CD14-positive monocyte (primary cell): ENCODE measurements at regions of chr1 and their contacts with region 1.

Region 1: DNA sequence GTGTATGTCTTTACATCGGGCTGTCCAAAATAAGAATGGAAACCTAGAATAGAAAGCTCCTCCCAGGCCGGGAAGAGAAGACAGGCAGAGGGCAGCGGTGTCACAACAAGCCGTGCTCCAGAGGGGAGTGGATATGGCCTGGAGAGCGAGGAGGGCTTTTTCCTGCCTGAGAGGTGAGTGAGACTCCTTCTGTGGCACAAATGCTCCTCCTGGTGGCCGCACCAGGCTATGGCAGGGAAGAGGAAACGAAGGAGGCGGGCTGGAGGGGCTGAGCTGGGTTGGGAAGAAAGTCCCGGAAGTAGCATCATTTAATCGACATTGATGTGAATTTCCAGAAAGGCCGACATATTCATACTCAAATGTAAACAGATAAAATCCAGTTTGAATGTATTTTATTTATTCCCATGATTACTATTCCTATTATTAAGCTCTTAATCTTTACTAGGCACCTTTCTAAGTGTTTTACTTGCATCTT is 54.7 kb downstream of the MEF2D start:
- DNase-seq: peak; percentile 63 to 77 (median 64)
- H3K4me3 ChIP-seq: no peak overlapping the region
- H3K4me3 Mint-ChIP-seq: peak overlapping the region in 1 of 2 donors; percentile 63
- H3K27ac ChIP-seq: no peak overlapping the region
- H3K27ac Mint-ChIP-seq: no peak overlapping the region
- H3K4me1 ChIP-seq: peaks cover 0 to 4% of the 10 kb centered on the region in 2 donors
- H3K4me1 Mint-ChIP-seq: peaks cover 5% of the 10 kb centered on the region
- H3K27me3 ChIP-seq: peaks cover 35 to 44% of the 10 kb centered on the region in 2 donors
- H3K27me3 Mint-ChIP-seq: peaks cover 52 to 64% (median 57%) of the 10 kb centered on the region in 3 donors
- CTCF ChIP-seq: peak; percentile 96

Region 2: DNA sequence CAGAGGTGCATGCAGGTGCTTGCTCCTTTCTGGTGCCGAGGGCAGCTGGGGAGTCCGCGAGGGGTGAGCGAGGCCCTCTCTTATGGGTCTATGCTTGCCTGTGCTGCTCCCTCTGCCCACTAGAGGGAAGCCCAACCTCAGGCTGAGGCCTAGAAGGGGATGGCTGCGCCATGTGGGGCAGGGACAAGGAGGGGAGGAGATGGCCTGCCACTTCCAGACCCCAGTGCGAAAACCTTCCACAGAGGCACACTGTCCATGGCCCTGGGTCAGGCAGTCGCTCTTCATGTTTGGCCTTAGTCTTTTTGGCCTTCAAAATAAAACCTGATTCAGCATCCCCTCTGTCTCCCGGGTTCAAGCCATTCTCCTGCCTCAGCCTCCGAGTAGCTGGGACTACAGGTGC is 62.8 kb before region 1 on chr1:
- intact Hi-C with region 1: loop called (anchors 1 to 2 kb)
- DNase-seq: peak in 2 of 3 donors; percentile 49 to 57
- H3K4me3 ChIP-seq: no peak overlapping the region
- H3K4me3 Mint-ChIP-seq: no peak overlapping the region
- H3K27ac ChIP-seq: no peak overlapping the region
- H3K27ac Mint-ChIP-seq: no peak overlapping the region
- H3K4me1 ChIP-seq: peaks cover 9% of the 10 kb centered on the region in 2 donors
- H3K4me1 Mint-ChIP-seq: peaks cover 14% of the 10 kb centered on the region
- H3K27me3 ChIP-seq: peaks cover 13 to 20% of the 10 kb centered on the region in 2 donors
- H3K27me3 Mint-ChIP-seq: peaks cover 23 to 29% (median 25%) of the 10 kb centered on the region in 3 donors
- CTCF ChIP-seq: peak; percentile 90

Region 3: DNA sequence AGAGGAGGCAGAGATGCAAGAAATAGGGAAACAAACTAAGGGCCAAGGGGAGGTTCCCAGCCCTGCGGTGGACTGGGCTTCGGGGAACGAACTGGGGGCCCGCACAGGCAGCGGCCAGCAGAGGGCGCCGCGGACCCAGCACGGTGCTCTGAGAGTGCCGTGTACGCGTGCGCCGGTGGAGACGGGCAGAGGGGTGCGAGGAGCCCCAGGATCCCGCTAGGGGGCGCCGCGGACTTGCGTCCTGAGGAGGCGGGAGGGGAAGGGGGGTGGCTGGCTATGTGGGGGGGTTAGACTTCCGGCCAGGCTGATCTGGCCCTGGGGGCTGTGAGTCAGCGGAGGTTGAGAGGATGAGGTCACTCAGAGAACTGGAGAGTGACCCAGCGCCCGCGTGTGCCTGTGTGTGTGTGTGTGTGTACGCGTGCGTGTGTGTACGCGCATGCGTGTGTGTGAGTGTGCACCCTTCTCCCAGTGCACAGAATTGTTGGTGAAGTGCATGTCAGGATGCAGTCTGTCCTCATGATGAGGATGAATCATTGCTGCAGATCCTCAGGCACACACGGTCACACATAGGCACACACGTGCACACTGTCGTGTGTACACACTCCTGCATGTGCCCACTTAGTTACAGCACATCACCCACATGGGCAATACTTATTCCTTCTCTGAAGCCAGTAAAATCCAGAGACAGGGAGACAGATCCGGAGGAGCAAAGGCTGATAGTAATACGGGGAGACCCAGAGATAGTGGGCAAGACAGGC is 214.3 kb after region 1 on chr1:
- intact Hi-C with region 1: no loop called
- DNase-seq: peak; percentile 91 to 98 (median 95)
- H3K4me3 ChIP-seq: no peak overlapping the region
- H3K4me3 Mint-ChIP-seq: peak overlapping the region; percentile 51 to 74
- H3K27ac ChIP-seq: no peak overlapping the region
- H3K27ac Mint-ChIP-seq: peak overlapping the region; percentile 74 to 85 (median 82)
- H3K4me1 ChIP-seq: peaks cover 73 to 80% of the 10 kb centered on the region in 2 donors
- H3K4me1 Mint-ChIP-seq: peaks cover 74% of the 10 kb centered on the region
- H3K27me3 ChIP-seq: peaks cover 22 to 40% of the 10 kb centered on the region in 2 donors
- H3K27me3 Mint-ChIP-seq: peaks cover 42 to 59% (median 45%) of the 10 kb centered on the region in 3 donors
- CTCF ChIP-seq: peak; percentile 99

Region 4: DNA sequence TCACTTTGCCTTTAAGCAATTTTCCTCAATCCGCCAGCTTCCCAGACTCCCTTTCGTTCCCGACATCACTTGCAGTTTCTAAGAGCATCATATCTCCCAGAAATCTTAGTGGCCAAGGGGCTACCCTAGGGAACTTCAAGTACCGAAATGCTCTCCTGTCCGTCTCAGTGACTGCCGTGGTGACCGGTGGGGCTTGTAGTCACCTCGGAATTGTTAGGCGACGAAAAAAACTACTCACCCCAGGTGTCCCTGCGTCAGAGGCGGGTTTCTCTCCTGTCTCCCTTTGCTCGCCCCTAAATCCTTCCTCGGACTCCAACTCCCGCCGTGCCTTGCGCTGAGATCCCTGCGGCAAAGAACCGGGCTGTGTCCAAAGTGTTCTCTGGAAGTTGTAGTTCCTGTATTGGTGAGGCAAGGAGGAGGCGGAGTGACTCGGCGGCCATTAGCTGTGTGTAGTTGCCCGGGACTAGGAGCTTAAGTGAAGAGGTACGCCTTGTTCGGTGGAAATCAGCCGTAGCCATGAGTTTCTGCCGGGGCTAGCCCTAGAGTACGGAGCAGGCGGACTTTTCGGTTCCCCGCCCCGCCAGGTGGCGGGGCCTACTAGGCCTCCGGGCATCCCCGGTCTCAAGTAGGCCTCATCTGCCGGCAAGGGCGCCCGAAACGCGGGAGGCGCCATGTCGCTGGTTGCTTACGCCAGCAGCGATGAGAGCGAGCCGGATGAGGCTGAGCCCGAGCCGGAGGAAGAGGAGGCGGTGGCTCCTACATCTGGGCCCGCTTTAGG is 321.5 kb after region 1 on chr1 and contains the start of gene PRCC:
- intact Hi-C with region 1: no loop called
- DNase-seq: peak; percentile 97 to 99 (median 99)
- H3K4me3 ChIP-seq: peak within 1 kb of the TSS; percentile 74 to 95 (median 79)
- H3K4me3 Mint-ChIP-seq: no peak within 1 kb of the TSS
- H3K27ac ChIP-seq: peak within 1 kb of the TSS; percentile 93 to 97
- H3K27ac Mint-ChIP-seq: no peak within 1 kb of the TSS
- H3K4me1 ChIP-seq: peaks cover 31 to 37% of the 10 kb centered on the region in 2 donors
- H3K4me1 Mint-ChIP-seq: peaks cover 29% of the 10 kb centered on the region
- H3K27me3 ChIP-seq: no peaks in the 10 kb centered on the region
- H3K27me3 Mint-ChIP-seq: peaks cover 0 to 2% (median 0%) of the 10 kb centered on the region in 3 donors
- CTCF ChIP-seq: no peak
- polyA plus RNA-seq, gene PRCC: 26.7 to 37.1 (median 29.6) TPM